IMR-90 (cell line): ENCODE measurements at regions of chr5 and their contacts with region 1.

Region 1: DNA sequence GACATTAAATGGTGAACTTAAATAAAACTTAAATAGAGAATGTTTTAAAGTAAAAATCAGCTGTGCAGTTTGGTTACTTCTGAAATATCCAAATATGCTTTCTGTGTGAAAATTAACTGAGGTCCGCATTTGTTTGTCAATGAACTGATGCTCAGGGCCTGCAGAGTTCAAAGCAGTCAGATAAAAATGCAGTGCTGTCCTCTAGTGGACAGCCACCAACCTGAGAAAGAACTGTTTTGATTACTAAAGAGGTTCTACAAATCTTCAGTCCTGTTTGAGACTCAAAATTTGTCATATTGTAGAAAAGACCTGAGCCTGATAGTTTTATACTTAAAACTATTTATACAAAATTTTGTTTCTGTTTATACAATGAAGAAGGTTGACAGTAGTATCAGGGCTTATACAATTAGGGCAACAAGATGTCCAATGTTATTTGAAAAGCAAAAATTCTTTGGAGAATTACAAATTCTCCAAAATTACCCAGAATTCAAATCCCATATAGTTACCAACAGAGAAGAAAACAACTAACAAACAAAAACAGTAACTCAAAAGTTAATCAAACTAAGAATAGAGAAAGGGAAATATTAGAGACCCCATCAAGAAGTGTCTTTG is 232.3 kb upstream of the TBCA start:
- DNase-seq: peak; percentile 58
- ATAC-seq: peak; percentile 28; the same call in 1 of the 2 replicates
- H3K4me3 ChIP-seq: no peak overlapping the region
- H3K27ac ChIP-seq: no peak overlapping the region
- H3K4me1 ChIP-seq: peaks cover 10% of the 10 kb centered on the region
- H3K27me3 ChIP-seq: no peaks in the 10 kb centered on the region
- CTCF ChIP-seq: peak; percentile 81
- POLR2A ChIP-seq: no peak
- RAD21 ChIP-seq: peak; percentile 80

Region 2: DNA sequence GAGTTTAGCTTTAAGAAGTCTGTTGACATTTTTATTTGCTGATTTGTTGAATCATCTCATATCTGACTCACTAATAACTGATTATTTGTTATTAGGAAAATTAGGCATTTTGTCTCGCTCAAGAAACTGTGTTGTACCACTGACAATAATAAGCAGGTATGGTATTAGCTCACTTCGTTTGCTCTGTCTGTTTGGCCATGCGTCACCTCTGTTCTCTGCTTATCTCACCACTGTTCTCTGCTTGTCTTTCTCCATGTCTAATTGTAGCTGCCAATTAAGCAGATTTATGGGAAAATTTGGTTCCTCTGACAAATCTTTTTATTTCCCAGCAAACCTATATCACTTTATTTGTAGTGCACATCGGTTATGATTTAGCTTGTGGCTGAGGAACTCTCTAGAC is 655.2 kb before region 1 on chr5:
- CTCF ChIA-PET with region 1: no interaction called
- POLR2A ChIA-PET with region 1: no interaction called
- dilution Hi-C with region 1: no loop called
- in situ Hi-C with region 1: no loop called
- intact Hi-C with region 1: no loop called
- DNase-seq: no peak
- ATAC-seq: no peak
- H3K4me3 ChIP-seq: no peak overlapping the region
- H3K27ac ChIP-seq: no peak overlapping the region
- H3K4me1 ChIP-seq: peaks cover 2% of the 10 kb centered on the region
- H3K27me3 ChIP-seq: peaks cover 22% of the 10 kb centered on the region
- CTCF ChIP-seq: no peak
- POLR2A ChIP-seq: no peak
- RAD21 ChIP-seq: no peak

Region 3: GRCh38 chr5:77560677-77561263 is 447.7 kb before region 1 on chr5:
- CTCF ChIA-PET with region 1: interaction called, 3 read pairs
- POLR2A ChIA-PET with region 1: no interaction called
- dilution Hi-C with region 1: no loop called
- in situ Hi-C with region 1: no loop called
- intact Hi-C with region 1: loop called (anchors 1 kb)
- DNase-seq: peak; percentile 55
- ATAC-seq: peak; percentile 63
- H3K4me3 ChIP-seq: no peak overlapping the region
- H3K27ac ChIP-seq: no peak overlapping the region
- H3K4me1 ChIP-seq: no peaks in the 10 kb centered on the region
- H3K27me3 ChIP-seq: peaks cover 13% of the 10 kb centered on the region
- CTCF ChIP-seq: peak; percentile 65
- POLR2A ChIP-seq: no peak
- RAD21 ChIP-seq: peak; percentile 71

Region 4: GRCh38 chr5:77607324-77607723 is 401.1 kb before region 1 on chr5:
- CTCF ChIA-PET with region 1: no interaction called
- POLR2A ChIA-PET with region 1: no interaction called
- dilution Hi-C with region 1: no loop called
- in situ Hi-C with region 1: no loop called
- intact Hi-C with region 1: no loop called
- DNase-seq: no peak
- ATAC-seq: no peak
- H3K4me3 ChIP-seq: no peak overlapping the region
- H3K27ac ChIP-seq: no peak overlapping the region
- H3K4me1 ChIP-seq: no peaks in the 10 kb centered on the region
- H3K27me3 ChIP-seq: peaks cover 4% of the 10 kb centered on the region
- CTCF ChIP-seq: no peak
- POLR2A ChIP-seq: no peak
- RAD21 ChIP-seq: no peak

Region 5: GRCh38 chr5:77645158-77645994 is 363.1 kb before region 1 on chr5:
- CTCF ChIA-PET with region 1: no interaction called
- POLR2A ChIA-PET with region 1: no interaction called
- dilution Hi-C with region 1: no loop called
- in situ Hi-C with region 1: no loop called
- intact Hi-C with region 1: loop called (anchors 10 kb)
- DNase-seq: no peak
- ATAC-seq: peak; percentile 70
- H3K4me3 ChIP-seq: peak overlapping the region; percentile 25; the same call in 1 of the 2 replicates
- H3K27ac ChIP-seq: no peak overlapping the region
- H3K4me1 ChIP-seq: peaks cover 2% of the 10 kb centered on the region; the same call in 1 of the 2 replicates
- H3K27me3 ChIP-seq: peaks cover 88% of the 10 kb centered on the region
- CTCF ChIP-seq: peak; percentile 47
- POLR2A ChIP-seq: no peak
- RAD21 ChIP-seq: peak; percentile 41

Region 6: GRCh38 chr5:77775790-77776553 is 232.5 kb before region 1 on chr5 and contains the start of gene TBCA:
- CTCF ChIA-PET with region 1: no interaction called
- POLR2A ChIA-PET with region 1: no interaction called
- dilution Hi-C with region 1: no loop called
- in situ Hi-C with region 1: no loop called
- intact Hi-C with region 1: loop called (anchors 5 kb)
- DNase-seq: peak; percentile 91
- ATAC-seq: peak; percentile 96
- H3K4me3 ChIP-seq: peak within 1 kb of the TSS; percentile 74
- H3K27ac ChIP-seq: peak within 1 kb of the TSS; percentile 88
- H3K4me1 ChIP-seq: peaks cover 6% of the 10 kb centered on the region; the same call in 1 of the 2 replicates
- H3K27me3 ChIP-seq: no peaks in the 10 kb centered on the region
- CTCF ChIP-seq: peak; percentile 22; the same call in 1 of the 2 replicates
- POLR2A ChIP-seq: peak; percentile 81
- RAD21 ChIP-seq: 0 out of 2 replicates have a peak, but pooled peaks have one; percentile 13
- total RNA-seq, gene TBCA: 6.1 and 28.6 TPM in 2 replicates

Region 7: DNA sequence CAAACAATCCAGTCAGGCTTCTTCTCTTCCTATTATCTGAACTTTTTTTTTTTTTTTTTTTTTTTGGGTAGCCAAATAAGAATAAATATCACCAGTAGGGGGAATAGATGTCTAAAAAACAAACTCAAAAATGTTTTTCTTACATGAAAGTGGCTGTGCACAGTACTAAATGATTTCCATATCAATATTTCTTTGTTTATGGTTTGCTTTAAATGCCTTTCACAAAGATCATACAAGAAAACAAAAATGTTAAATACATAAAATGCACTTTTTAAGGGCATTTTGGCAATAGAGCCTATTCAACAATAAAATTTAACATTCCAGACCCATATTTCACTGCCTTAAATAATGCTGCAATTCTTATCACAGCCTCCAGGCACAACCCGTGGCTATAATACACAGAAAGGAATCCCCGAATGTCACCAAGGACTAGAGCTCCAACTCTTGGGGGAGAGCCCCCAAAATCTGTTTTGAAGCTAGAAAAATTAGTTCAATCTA is 141.2 kb before region 1 on chr5:
- CTCF ChIA-PET with region 1: no interaction called
- POLR2A ChIA-PET with region 1: no interaction called
- dilution Hi-C with region 1: no loop called
- in situ Hi-C with region 1: no loop called
- intact Hi-C with region 1: loop called (anchors 1 kb)
- DNase-seq: peak; percentile 32
- ATAC-seq: peak; percentile 82
- H3K4me3 ChIP-seq: no peak overlapping the region
- H3K27ac ChIP-seq: no peak overlapping the region
- H3K4me1 ChIP-seq: no peaks in the 10 kb centered on the region
- H3K27me3 ChIP-seq: peaks cover 19% of the 10 kb centered on the region
- CTCF ChIP-seq: peak; percentile 40
- POLR2A ChIP-seq: no peak
- RAD21 ChIP-seq: peak; percentile 27; the same call in 1 of the 2 replicates

Region 8: DNA sequence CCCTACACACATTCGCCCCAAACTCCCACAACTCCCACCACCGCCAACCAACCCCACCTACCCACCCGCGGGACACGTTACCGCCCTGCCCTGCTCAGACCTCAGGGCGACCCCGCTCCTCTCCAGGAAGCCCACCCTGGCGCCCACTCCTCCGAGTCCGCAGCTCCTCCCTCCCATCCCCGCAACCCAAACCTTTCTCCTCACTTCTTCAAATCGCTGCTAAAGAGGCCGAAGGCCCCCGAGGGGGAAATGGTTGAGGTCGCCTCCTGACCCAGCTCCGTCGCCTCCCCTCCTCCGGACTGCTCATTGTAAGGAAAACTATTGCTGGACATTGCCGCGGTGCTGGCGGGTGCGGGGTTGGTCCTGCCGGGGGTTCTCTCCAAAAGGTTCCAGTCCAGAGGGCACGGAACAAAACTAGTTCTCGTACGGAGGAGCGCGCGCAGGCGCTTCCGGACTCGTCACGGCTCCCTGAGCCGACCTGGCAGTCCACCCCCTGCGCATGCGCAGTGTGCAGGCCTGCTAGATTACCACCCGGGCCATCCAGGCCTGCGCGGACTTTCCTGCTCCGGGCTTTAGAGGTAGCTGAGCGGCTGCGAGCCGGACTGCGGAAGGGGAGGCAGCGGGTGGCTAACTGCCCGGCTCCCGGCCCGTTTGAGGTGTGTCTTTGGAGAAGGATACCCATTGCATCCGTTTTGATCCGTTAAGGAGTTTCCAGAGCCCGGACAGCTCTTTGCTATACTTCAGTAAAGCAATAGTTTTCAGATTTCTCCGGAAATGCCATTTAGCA is 286.0 kb after region 1 on chr5 and contains the start of gene AP3B1:
- CTCF ChIA-PET with region 1: interaction called, 3 read pairs
- POLR2A ChIA-PET with region 1: no interaction called
- dilution Hi-C with region 1: no loop called
- in situ Hi-C with region 1: no loop called
- intact Hi-C with region 1: loop called (anchors 1 kb)
- DNase-seq: peak; percentile 99
- ATAC-seq: peak; percentile 97
- H3K4me3 ChIP-seq: peak within 1 kb of the TSS; percentile 86
- H3K27ac ChIP-seq: peak within 1 kb of the TSS; percentile 94
- H3K4me1 ChIP-seq: peaks cover 3% of the 10 kb centered on the region
- H3K27me3 ChIP-seq: no peaks in the 10 kb centered on the region
- CTCF ChIP-seq: no peak
- POLR2A ChIP-seq: peak; percentile 87
- RAD21 ChIP-seq: no peak; the same call in 1 of the 2 replicates
- total RNA-seq, gene AP3B1: 59.0 and 67.8 TPM in 2 replicates